ENCODE measurements at regions of chr19 and their contacts with region 1.

Region 1: GRCh38 chr19:33176670-33177416 is 17.3 kb upstream of the LRP3 start:
- DNase-seq: peak; percentile 98
- H3K4me3 Mint-ChIP-seq: peak overlapping the region; percentile 96
- H3K27ac Mint-ChIP-seq: peak overlapping the region; percentile 94
- H3K4me1 Mint-ChIP-seq: peaks cover 31% of the 10 kb centered on the region
- H3K27me3 Mint-ChIP-seq: peaks cover 4% of the 10 kb centered on the region

Region 2: DNA sequence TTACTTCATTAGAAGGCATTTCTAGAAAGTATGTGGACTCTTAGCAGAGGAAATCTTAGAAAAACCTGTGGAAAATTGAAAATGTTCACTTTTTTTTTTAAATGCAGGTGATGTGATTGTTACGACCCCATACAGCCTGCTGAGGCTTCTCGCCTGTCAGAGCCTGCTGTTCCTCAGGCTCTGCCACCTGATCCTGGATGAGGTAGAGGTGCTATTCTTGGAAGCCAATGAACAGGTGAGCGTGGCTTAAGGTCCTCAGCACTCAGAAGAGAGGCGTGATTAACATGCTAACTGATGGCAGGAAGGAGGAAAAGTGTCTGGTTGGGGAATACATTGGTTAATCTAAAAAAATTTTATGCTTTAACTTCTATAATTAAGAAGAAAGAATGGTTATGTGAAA is 378.6 kb before region 1 on chr19:
- CTCF ChIA-PET with region 1: no interaction called
- POLR2A ChIA-PET with region 1: no interaction called
- DNase-seq: no peak
- H3K4me3 Mint-ChIP-seq: no peak overlapping the region
- H3K27ac Mint-ChIP-seq: no peak overlapping the region
- H3K4me1 Mint-ChIP-seq: peaks cover 15% of the 10 kb centered on the region
- H3K27me3 Mint-ChIP-seq: no peaks in the 10 kb centered on the region

Region 3: GRCh38 chr19:32971715-32972540 is 204.9 kb before region 1 on chr19 and contains the starts of genes CEP89 and FAAP24:
- CTCF ChIA-PET with region 1: interaction called, 16 read pairs
- POLR2A ChIA-PET with region 1: interaction called, 14 read pairs
- DNase-seq: peak; percentile 99
- H3K4me3 Mint-ChIP-seq: peak within 1 kb of the TSS; percentile 96
- H3K27ac Mint-ChIP-seq: peak within 1 kb of the TSS; percentile 82
- H3K4me1 Mint-ChIP-seq: peaks cover 31% of the 10 kb centered on the region
- H3K27me3 Mint-ChIP-seq: no peaks in the 10 kb centered on the region
- total RNA-seq, gene CEP89: 18.1 to 19.8 TPM
- total RNA-seq, gene FAAP24: 5.3 to 7.6 TPM

Region 4: GRCh38 chr19:33143897-33144405 is 32.9 kb before region 1 on chr19:
- CTCF ChIA-PET with region 1: interaction called, 26 read pairs
- POLR2A ChIA-PET with region 1: interaction called, 8 read pairs
- DNase-seq: peak; percentile 66
- H3K4me3 Mint-ChIP-seq: no peak overlapping the region
- H3K27ac Mint-ChIP-seq: no peak overlapping the region
- H3K4me1 Mint-ChIP-seq: peaks cover 5% of the 10 kb centered on the region
- H3K27me3 Mint-ChIP-seq: peaks cover 5% of the 10 kb centered on the region

Region 5: DNA sequence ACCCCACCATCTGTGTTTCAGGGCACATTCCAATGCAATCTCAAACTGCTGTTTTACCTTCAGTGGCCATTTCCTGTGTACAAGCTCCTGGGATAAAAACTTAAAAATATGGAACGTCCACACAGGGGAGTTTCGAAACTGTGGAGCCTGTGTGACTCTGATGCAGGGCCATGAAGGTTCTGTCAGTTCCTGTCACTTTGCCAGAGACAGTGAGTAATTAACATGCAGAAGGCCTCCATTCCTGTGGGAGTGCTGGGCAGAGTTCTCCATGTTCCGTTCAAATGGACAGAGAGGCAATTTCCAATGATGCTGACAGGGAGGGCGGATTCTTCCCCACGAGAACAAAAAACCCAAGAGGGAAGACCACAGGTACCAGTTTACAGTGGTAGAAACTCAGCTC is 20.5 kb before region 1 on chr19:
- CTCF ChIA-PET with region 1: interaction called, 72 read pairs
- POLR2A ChIA-PET with region 1: interaction called, 119 read pairs
- DNase-seq: no peak
- H3K4me3 Mint-ChIP-seq: no peak overlapping the region
- H3K27ac Mint-ChIP-seq: no peak overlapping the region
- H3K4me1 Mint-ChIP-seq: peaks cover 33% of the 10 kb centered on the region
- H3K27me3 Mint-ChIP-seq: peaks cover 2% of the 10 kb centered on the region

Region 6: DNA sequence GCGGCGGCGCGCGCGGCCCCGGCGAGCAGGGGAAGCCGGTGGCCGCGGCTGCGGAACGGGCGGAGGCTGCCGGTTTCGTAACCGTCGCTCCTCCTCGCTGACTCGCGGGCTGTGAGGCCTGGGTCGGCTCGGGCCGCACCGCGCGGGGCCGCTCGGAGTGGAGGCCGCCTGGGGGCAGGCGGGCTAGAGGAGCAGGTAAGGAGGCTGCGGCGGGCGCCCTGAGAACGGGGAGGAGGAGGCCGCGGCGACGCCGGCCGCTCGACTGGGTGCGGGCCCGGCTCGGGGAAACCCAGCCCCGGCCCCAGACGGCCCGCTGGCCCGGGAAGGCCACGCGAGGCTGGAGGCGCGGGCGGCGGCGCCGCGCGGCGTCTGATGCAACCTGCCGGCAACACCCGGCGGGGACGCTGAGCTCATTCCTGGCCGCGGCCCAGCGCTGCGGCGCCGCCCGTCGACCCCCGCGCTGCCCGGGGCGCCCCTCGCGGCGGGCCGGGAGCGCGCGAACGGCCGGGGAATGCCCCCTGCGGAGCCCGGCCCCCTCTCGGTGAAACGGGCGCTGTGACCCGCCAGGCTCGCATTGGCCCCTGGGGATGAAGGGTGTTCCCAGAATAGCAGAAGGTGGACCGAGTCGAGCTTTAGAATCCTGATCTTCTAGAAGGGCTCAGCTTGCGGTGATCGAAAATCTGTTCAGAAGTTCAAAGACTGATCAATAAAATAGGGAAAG is 197.0 kb after region 1 on chr19 and contains the start of gene CEBPG:
- CTCF ChIA-PET with region 1: interaction called, 10 read pairs
- POLR2A ChIA-PET with region 1: interaction called, 46 read pairs
- DNase-seq: no peak
- H3K4me3 Mint-ChIP-seq: peak within 1 kb of the TSS; percentile 88
- H3K27ac Mint-ChIP-seq: peak within 1 kb of the TSS; percentile 82
- H3K4me1 Mint-ChIP-seq: peaks cover 51% of the 10 kb centered on the region
- H3K27me3 Mint-ChIP-seq: no peaks in the 10 kb centered on the region
- total RNA-seq, gene CEBPG: 30.0 to 31.4 TPM

Measured in activated CD4-positive, alpha-beta memory T cell treated with anti-CD3 and anti-CD28 coated beads, Interleukin-2, amount 10 ng/mL, durations not matched to agents 7 days and 5 days (primary cell).